Sigmoid colon (tissue), 7 donors: ENCODE measurements at regions of chr6 and their contacts with region 1.

Region 1: DNA sequence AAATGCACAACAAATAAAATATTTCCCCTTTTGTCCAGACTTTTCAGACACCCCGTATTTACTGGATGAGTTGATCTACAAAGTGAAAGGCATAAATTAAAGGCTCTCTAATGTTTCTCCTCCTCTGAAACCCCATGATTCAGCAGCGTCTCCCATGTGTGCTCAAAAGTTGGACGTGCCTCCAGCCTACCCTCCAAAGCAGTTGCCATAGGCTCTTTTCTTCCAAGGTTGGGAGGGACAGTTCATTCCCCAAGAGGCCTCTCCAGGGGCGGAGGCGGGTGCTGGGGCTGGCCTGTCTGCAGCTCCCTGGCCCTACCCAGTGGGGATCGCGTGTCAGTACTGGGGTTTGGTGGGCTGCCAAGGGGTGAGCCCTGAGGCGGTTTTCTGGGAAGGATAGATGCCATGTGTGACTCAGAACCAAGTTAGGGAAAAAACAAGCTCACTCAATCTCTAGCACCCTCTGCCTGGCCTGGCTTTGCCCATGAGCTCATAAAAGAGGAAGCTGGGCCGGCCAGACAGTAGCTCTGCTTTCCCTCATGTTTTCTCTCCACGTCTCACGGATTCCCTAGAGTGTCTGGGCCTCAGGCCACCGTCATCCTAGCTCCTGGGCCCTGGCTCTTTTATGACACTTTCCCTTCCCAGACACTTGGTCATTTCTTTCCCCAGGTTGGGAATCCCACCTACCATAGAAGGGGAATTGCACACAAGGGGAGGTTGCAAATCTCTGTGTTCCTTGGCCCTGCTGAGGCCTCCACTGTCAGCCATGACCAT is 8.0 kb upstream of the IER3 start:
- DNase-seq: peak; percentile 98
- H3K4me3 ChIP-seq: no peak overlapping the region
- H3K27ac ChIP-seq: peak overlapping the region; percentile 81 to 93 (median 88)
- H3K4me1 ChIP-seq: peaks cover 0 to 74% (median 57%) of the 10 kb centered on the region in 4 donors
- H3K27me3 ChIP-seq: no peaks in the 10 kb centered on the region
- CTCF ChIP-seq: no peak
- EP300 ChIP-seq: peak; percentile 67 to 86 (median 68)
- POLR2A ChIP-seq: no peak

Region 2: GRCh38 chr6:30646458-30647241 is 105.7 kb before region 1 on chr6 and contains the start of gene C6orf136:
- intact Hi-C with region 1: no loop called
- DNase-seq: peak; percentile 97
- H3K4me3 ChIP-seq: peak within 1 kb of the TSS; percentile 72 to 94 (median 84)
- H3K27ac ChIP-seq: peak within 1 kb of the TSS; percentile 92 to 99 (median 95)
- H3K4me1 ChIP-seq: peaks cover 0 to 26% (median 15%) of the 10 kb centered on the region in 4 donors
- H3K27me3 ChIP-seq: no peaks in the 10 kb centered on the region
- CTCF ChIP-seq: no peak
- EP300 ChIP-seq: no peak
- POLR2A ChIP-seq: no peak
- total RNA-seq, gene C6orf136: 7.8 to 36.7 (median 20.7) TPM

Region 3: GRCh38 chr6:30781743-30782424 is 29.5 kb after region 1 on chr6:
- intact Hi-C with region 1: loop called (anchors 1 kb)
- DNase-seq: peak; percentile 99
- H3K4me3 ChIP-seq: no peak overlapping the region
- H3K27ac ChIP-seq: peak overlapping the region; percentile 85 to 90 (median 88)
- H3K4me1 ChIP-seq: peaks cover 2 to 54% (median 47%) of the 10 kb centered on the region in 4 donors
- H3K27me3 ChIP-seq: no peaks in the 10 kb centered on the region
- CTCF ChIP-seq: no peak
- EP300 ChIP-seq: peak; percentile 76 to 96 (median 86)
- POLR2A ChIP-seq: peak in 1 of 2 donors; percentile 19